ENCODE measurements at regions of chr7 and their contacts with region 1.

Region 1: DNA sequence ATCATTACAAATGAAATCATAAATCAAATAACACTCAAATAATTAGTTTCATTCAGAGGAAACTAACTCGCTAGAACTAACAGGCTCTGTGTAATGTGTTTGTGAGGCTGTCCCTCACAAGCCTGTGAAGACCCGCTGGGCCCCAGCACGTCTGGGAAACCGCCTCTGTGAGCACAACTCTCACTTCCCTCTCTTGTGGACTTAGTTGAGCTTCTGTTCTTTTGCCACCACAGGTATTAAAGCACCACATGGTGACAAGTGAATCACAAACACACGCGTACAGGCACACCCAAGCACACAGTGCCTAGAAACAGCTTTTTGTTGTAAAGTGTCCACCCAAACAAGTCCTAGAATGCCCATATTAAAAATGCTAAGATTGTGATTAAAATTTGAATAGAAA is 51.0 kb downstream of the ZNF777 start:
- DNase-seq: no peak
- H3K4me3 ChIP-seq: no peak overlapping the region
- H3K27ac ChIP-seq: no peak overlapping the region
- H3K4me1 ChIP-seq: peaks cover 0 to 2% (median 0%) of the 10 kb centered on the region in 4 experiments; a peak in 1 of 7 replicates
- H3K27me3 ChIP-seq: no peaks in the 10 kb centered on the region
- CTCF ChIP-seq: no peak
- EP300 ChIP-seq: no peak
- POLR2A ChIP-seq: no peak
- RAD21 ChIP-seq: no peak

Region 2: DNA sequence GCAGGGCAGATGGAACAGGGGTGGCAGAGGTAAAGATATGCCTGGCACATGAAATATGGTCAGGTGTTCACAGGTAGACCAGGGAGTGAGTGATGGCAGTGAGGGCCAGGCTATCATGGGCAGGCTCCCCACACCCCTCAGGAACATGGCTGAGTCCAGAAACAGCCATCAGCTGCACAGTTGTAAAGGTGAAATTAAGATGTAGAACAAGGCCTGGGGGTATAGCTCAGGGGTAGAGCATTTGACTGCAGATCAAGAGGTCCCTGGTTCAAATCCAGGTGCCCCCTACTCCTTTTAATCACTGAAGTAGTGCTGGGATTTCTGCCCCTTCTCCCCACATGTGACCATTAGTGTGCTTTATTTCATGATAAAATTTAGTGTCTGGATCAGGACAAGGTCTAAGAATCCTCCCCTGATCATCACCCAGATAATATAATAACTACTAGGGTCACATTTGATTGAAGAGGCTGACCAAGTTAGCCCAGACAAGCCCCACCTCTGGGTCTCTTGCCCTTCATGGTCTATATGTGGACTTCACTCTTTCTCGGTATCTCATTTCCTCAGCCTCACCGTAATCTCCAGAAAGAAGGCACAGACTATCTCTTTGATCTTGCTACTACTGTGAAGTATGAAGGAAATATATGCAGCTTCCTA is 78.9 kb before region 1 on chr7:
- CTCF ChIA-PET with region 1: interaction called, 10 read pairs
- POLR2A ChIA-PET with region 1: no interaction called
- DNase-seq: no peak
- H3K4me3 ChIP-seq: no peak overlapping the region
- H3K27ac ChIP-seq: no peak overlapping the region
- H3K4me1 ChIP-seq: no peaks in the 10 kb centered on the region
- H3K27me3 ChIP-seq: no peaks in the 10 kb centered on the region
- CTCF ChIP-seq: no peak
- EP300 ChIP-seq: no peak
- POLR2A ChIP-seq: no peak
- RAD21 ChIP-seq: no peak

Region 3: GRCh38 chr7:149355390-149356048 is 54.4 kb before region 1 on chr7:
- CTCF ChIA-PET with region 1: interaction called, 16 read pairs
- POLR2A ChIA-PET with region 1: no interaction called
- DNase-seq: peak; percentile 81 to 87
- H3K4me3 ChIP-seq: peak overlapping the region; percentile 17 to 58 (median 42); a peak in 7 of 8 replicates
- H3K27ac ChIP-seq: no peak overlapping the region; the same call in 1 of the 2 replicates
- H3K4me1 ChIP-seq: peaks cover 0 to 3% (median 0%) of the 10 kb centered on the region in 4 experiments; a peak in 3 of 7 replicates
- H3K27me3 ChIP-seq: no peaks in the 10 kb centered on the region
- CTCF ChIP-seq: peak; percentile 37 to 56 (median 50)
- EP300 ChIP-seq: no peak
- POLR2A ChIP-seq: no peak
- RAD21 ChIP-seq: peak; percentile 39 to 58; a peak in 3 of 4 replicates

Region 4: DNA sequence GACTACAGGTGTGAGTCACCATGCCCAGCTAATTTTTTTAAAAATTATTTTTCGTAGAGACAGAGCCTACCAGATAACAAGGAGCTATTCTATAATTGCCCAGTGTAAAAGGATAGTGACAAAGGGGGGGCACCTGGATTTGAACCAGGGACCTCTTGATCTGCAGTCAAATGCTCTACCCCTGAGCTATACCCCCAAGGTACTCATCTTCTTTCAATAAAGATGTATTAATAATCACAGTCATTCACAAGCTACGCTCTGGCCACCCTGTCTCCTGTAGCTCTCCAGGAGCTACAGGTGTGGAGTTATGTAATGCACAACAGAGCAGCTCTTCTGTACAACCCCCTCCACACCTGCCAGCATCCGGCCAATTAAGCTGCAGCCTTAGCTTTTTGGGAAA is 32.5 kb before region 1 on chr7:
- CTCF ChIA-PET with region 1: interaction called, 10 read pairs
- POLR2A ChIA-PET with region 1: no interaction called
- DNase-seq: no peak
- H3K4me3 ChIP-seq: no peak overlapping the region
- H3K27ac ChIP-seq: no peak overlapping the region
- H3K4me1 ChIP-seq: no peaks in the 10 kb centered on the region
- H3K27me3 ChIP-seq: no peaks in the 10 kb centered on the region
- CTCF ChIP-seq: no peak
- EP300 ChIP-seq: no peak
- POLR2A ChIP-seq: no peak
- RAD21 ChIP-seq: no peak

Region 5: GRCh38 chr7:149398195-149398820 is 11.6 kb before region 1 on chr7:
- CTCF ChIA-PET with region 1: interaction called, 19 read pairs
- POLR2A ChIA-PET with region 1: no interaction called
- DNase-seq: no peak
- H3K4me3 ChIP-seq: no peak overlapping the region
- H3K27ac ChIP-seq: no peak overlapping the region
- H3K4me1 ChIP-seq: peaks cover 0 to 2% (median 0%) of the 10 kb centered on the region in 4 experiments; a peak in 2 of 7 replicates
- H3K27me3 ChIP-seq: no peaks in the 10 kb centered on the region
- CTCF ChIP-seq: no peak
- EP300 ChIP-seq: no peak
- POLR2A ChIP-seq: no peak
- RAD21 ChIP-seq: no peak

Region 6: DNA sequence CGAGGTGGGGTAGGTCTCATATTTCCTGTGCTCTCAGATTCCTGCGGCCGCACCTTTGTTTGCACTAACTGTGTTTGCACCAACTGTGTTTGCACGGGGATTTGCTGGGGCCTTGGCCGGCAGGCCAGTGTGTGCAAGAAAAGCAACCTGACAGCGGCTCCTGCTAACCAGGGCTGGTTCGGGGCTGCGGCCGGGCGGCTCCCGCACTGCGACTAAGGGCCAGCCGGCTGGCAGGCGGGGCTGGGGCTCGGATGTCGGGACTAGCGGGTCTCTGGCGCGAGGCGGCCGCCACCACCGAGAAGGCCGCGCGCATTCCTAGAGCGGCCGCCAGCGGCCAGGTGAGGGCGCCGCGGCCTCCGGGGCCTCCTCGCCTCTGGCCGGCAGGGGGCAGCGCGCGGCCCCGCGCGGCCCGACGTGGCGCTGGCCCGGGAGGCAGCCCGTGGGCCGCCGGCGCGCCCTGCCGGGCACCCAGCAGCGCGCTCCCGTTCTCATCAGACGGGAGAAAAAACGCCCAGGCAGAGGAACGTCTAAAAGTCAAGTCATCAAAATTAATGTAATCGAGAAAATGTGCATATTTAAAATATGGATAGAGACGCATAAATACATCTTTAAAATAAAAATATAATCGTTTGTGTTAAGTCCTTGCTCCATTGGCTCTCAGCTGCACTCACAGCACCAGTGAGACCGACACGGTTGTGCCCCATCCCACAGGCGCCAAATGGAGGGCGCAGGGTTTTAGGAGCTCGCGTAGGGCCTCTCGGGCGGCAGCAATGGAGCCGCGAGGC is 12.4 kb after region 1 on chr7:
- CTCF ChIA-PET with region 1: interaction called, 16 read pairs
- POLR2A ChIA-PET with region 1: interaction called, 3 read pairs
- DNase-seq: peak in 1 of 2 experiments; percentile 83
- H3K4me3 ChIP-seq: peak overlapping the region; percentile 54 to 73 (median 61)
- H3K27ac ChIP-seq: no peak overlapping the region
- H3K4me1 ChIP-seq: peaks cover 0 to 4% (median under 1%) of the 10 kb centered on the region in 4 experiments; a peak in 4 of 7 replicates
- H3K27me3 ChIP-seq: peaks cover 0 to 7% (median 6%) of the 10 kb centered on the region in 4 experiments; a peak in 5 of 7 replicates
- CTCF ChIP-seq: peak; percentile 78 to 98 (median 82)
- EP300 ChIP-seq: no peak
- POLR2A ChIP-seq: peak in 1 of 2 experiments; percentile 46; a peak in 1 of 3 replicates
- RAD21 ChIP-seq: peak; percentile 42 to 56; a peak in 3 of 4 replicates

Region 7: DNA sequence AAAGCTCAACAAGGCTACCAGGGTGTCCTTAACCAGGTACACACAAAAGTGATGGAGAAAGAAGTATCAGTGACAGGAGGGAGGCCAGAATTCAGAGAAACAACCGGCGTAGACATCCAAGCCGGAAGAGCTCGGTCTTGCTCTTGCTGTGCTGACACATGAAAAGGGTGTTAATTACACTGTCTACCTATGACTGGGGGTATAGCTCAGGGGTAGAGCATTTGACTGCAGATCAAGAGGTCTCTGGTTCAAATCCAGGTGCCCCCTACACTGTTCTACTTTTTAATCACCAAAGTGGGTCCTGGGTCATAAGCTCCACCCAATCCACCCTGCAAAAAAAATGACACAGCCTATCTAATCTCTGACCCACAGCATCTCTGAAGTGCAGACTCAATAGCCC is 174.6 kb after region 1 on chr7:
- CTCF ChIA-PET with region 1: no interaction called
- POLR2A ChIA-PET with region 1: no interaction called
- DNase-seq: no peak
- H3K4me3 ChIP-seq: no peak overlapping the region
- H3K27ac ChIP-seq: no peak overlapping the region
- H3K4me1 ChIP-seq: no peaks in the 10 kb centered on the region
- H3K27me3 ChIP-seq: no peaks in the 10 kb centered on the region
- CTCF ChIP-seq: no peak
- EP300 ChIP-seq: no peak
- POLR2A ChIP-seq: no peak
- RAD21 ChIP-seq: no peak

Region 8: DNA sequence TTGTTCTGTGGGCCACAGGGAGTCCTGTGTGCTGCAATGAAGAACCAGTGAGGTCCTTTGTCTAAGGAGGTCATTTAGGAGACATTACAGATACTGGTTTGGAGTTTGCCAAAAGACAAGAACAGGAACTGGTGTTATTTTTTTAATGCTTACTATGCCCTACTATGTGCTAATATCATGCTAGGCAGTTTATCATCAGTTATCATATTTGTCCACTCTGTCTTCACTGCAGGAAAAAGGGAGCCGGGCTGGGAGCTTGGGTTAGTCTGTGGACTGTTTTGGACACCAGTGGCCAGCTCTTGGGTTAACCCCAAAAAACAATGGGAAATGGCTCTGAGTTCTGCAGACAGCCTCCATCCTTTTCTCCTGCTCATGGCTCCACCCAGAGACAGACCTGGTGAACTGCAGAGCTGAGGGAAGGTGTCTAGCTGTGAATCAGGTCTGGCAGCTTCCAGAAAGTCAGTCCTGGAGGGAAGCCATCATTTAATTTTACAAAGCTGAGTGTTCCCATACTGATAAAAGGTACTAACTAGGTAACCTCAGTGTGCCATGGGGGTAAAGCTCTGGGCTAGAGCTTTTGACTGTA is 188.9 kb after region 1 on chr7:
- CTCF ChIA-PET with region 1: no interaction called
- POLR2A ChIA-PET with region 1: no interaction called
- DNase-seq: peak in 1 of 2 experiments; percentile 56
- H3K4me3 ChIP-seq: no peak overlapping the region
- H3K27ac ChIP-seq: no peak overlapping the region
- H3K4me1 ChIP-seq: no peaks in the 10 kb centered on the region
- H3K27me3 ChIP-seq: no peaks in the 10 kb centered on the region
- CTCF ChIP-seq: peak; percentile 56 to 75 (median 70)
- EP300 ChIP-seq: no peak
- POLR2A ChIP-seq: no peak
- RAD21 ChIP-seq: peak; percentile 74 to 81